ENCODE measurements at regions of chr5 and their contacts with region 1.

Region 1: GRCh38 chr5:163815240-163815791 is 309.9 kb downstream of the MAT2B start:
- DNase-seq: no peak
- ATAC-seq: no peak
- H3K4me3 ChIP-seq: no peak overlapping the region
- H3K27ac ChIP-seq: no peak overlapping the region
- H3K4me1 ChIP-seq: no peaks in the 10 kb centered on the region
- H3K27me3 ChIP-seq: no peaks in the 10 kb centered on the region
- CTCF ChIP-seq: no peak
- EP300 ChIP-seq: no peak
- POLR2A ChIP-seq: no peak
- RAD21 ChIP-seq: no peak

Region 2: DNA sequence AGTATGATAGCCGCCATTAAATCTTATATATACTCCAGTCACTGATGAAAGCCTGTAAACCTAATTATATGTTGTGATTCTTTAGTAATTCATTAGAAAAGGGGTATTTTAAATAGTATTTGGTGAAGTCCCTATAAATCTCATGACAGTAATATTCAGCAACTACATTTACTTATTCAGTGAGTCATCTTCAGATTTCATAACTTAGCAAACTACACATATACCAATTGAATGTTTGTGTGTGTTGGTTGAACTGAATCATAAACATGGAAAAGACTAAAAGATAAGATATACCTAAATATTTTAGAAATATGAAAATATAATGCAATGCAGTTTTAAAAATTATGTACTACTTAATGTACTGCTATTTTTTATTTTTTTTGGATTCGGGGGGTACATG is 740.5 kb after region 1 on chr5:
- CTCF ChIA-PET with region 1: no interaction called
- POLR2A ChIA-PET with region 1: no interaction called
- in situ Hi-C with region 1: loop called (anchors 5 kb)
- intact Hi-C with region 1: no loop called
- DNase-seq: no peak
- ATAC-seq: no peak
- H3K4me3 ChIP-seq: no peak overlapping the region
- H3K27ac ChIP-seq: no peak overlapping the region
- H3K4me1 ChIP-seq: no peaks in the 10 kb centered on the region
- H3K27me3 ChIP-seq: no peaks in the 10 kb centered on the region
- CTCF ChIP-seq: no peak
- EP300 ChIP-seq: no peak
- POLR2A ChIP-seq: no peak
- RAD21 ChIP-seq: no peak

Measured in K562 (cell line).